Common myeloid progenitor, CD34-positive (primary cell): ENCODE measurements at regions of chr14 and their contacts with region 1.

Region 1: DNA sequence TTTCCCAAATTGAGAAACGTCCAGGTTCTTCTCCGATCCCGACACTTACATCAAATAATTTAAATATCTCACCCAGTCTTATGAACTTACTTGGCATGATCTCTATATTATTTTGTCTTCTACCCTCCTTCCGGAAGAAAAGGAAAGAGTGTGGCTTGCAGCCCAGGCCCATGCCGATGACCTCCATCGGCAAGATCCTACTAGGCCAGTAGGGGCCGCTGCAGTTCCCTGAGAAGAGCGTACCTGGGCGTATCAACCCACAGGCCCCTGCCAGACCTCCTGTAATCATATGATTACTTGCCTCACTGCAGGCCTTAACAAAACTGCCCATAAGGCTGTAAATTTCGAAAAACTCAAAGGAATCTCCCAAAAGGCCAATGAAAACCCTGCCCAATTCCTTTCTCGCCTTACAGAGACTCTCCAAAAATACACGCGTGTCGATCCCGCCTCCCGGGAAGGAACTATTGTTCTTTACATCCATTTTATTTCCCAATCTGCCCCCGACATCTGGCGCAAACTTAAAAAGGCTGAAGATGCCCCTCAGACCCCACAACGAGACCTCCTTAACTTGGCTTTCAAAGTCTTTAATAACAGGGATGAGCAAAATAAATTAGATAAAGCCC is 69.6 kb downstream of the MOK start:
- DNase-seq: peak; percentile 75 to 89 (median 88)
- H3K4me3 ChIP-seq: peak overlapping the region in 6 of 7 experiments; percentile 23 to 70 (median 46)
- H3K27ac ChIP-seq: no peak overlapping the region
- H3K4me1 ChIP-seq: peaks cover 0 to 7% (median 2%) of the 10 kb centered on the region in 4 experiments
- H3K27me3 ChIP-seq: no peaks in the 10 kb centered on the region

Region 2: GRCh38 chr14:102304611-102305509 is 69.5 kb after region 1 on chr14 and contains the start of gene MOK:
- CTCF ChIA-PET with region 1: interaction called, 10 read pairs
- POLR2A ChIA-PET with region 1: no interaction called
- DNase-seq: peak; percentile 97 to 98 (median 97)
- H3K4me3 ChIP-seq: peak within 1 kb of the TSS; percentile 32 to 95 (median 82)
- H3K27ac ChIP-seq: peak within 1 kb of the TSS; percentile 87 to 96
- H3K4me1 ChIP-seq: peaks cover 4 to 9% (median 6%) of the 10 kb centered on the region in 4 experiments
- H3K27me3 ChIP-seq: no peaks in the 10 kb centered on the region

Region 3: DNA sequence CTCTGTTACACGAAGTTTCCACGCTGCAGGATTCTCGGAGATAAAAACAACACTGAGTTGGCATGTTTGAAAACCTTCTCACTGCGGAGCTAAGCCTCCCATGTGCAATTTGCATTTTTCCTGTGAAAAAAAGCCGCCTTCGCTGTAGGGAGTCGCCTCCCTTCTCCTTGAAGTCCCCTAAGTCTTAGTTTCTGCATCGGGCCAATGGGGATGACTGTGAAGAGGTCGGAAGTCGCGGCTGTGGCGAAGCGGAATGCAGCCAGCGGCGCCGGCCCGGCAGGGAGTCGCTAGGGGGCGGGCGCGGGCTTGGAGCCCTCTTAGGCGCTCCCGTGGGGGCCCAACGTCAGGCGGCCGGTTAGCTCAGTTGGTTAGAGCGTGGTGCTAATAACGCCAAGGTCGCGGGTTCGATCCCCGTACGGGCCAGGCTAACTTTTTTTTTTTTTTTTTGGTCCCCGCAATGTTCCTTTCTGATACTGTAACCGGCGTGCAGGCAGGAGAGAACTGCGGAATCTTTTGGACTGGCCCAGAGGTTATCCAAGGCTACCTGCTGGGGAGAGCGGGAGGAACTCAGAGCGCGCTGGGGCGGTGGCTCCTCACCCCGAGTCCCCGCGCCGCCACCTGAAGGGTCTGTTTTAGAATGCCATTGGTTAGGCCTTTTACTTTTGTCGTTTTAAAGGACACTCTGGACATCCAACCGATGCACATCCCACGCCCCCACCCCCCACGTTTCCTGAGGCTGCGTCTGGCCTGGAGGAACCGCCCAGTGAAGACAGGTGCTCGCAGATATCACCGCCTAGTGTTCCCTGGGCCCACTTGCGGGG is 81.6 kb after region 1 on chr14:
- CTCF ChIA-PET with region 1: interaction called, 34 read pairs
- POLR2A ChIA-PET with region 1: interaction called, 5 read pairs
- DNase-seq: peak; percentile 86 to 91 (median 91)
- H3K4me3 ChIP-seq: peak overlapping the region; percentile 61 to 79 (median 76)
- H3K27ac ChIP-seq: peak overlapping the region in 1 of 2 experiments; percentile 78
- H3K4me1 ChIP-seq: peaks cover 0 to 52% (median 46%) of the 10 kb centered on the region in 4 experiments
- H3K27me3 ChIP-seq: no peaks in the 10 kb centered on the region